Transverse colon (tissue), 4 donors: ENCODE measurements at regions of chr17 and their contacts with region 1.

Region 1: DNA sequence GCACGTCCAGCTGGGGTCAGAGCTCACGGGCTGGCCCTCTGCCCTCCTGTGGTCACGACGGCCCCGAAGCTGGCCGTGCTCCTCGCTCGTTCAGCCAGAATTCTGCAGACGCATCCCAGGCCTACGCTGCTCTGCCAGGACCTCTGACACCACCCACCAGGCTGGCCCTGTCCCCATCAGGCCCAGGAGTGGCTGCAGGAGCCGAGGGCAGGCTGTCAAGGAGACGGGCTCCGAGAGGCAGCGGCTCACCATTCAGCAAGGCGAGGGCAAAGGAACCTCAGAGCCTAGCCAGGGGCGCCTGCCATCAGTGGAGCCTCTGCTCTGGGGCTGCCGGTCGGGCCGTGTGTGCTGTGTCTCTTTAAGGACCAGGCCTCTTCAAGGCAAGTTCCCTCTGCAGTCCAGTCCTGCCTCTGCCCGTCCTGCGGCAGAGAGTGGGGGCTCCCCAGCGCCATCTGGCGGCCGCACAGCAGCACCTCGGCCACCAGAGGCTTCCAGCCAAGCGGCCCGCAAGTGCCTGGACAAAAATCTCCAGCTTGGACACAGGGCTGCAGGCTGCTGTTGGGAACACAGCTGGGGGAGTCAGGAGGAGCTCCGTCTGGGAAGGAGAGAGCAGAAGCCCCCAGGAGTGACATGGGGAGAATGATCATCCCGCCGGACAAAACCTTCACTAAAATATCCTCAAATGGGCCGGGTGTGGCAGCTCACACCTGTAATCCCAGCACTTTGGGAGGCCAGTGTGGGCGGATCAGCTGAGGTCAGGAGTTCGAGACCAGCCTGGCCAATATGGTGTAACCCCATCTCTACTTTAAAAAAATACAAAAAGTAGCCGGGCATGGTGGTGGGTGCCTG is 7.4 kb upstream of the ABR start:
- DNase-seq: peak; percentile 86
- H3K4me3 ChIP-seq: peak overlapping the region in 1 of 4 donors; percentile 10
- H3K27ac ChIP-seq: peak overlapping the region; percentile 35 to 69 (median 56)
- H3K4me1 ChIP-seq: peaks cover 0 to 41% (median 18%) of the 10 kb centered on the region in 4 donors
- H3K27me3 ChIP-seq: no peaks in the 10 kb centered on the region
- CTCF ChIP-seq: peak; percentile 94 to 99 (median 97)
- EP300 ChIP-seq: no peak
- POLR2A ChIP-seq: no peak

Region 2: DNA sequence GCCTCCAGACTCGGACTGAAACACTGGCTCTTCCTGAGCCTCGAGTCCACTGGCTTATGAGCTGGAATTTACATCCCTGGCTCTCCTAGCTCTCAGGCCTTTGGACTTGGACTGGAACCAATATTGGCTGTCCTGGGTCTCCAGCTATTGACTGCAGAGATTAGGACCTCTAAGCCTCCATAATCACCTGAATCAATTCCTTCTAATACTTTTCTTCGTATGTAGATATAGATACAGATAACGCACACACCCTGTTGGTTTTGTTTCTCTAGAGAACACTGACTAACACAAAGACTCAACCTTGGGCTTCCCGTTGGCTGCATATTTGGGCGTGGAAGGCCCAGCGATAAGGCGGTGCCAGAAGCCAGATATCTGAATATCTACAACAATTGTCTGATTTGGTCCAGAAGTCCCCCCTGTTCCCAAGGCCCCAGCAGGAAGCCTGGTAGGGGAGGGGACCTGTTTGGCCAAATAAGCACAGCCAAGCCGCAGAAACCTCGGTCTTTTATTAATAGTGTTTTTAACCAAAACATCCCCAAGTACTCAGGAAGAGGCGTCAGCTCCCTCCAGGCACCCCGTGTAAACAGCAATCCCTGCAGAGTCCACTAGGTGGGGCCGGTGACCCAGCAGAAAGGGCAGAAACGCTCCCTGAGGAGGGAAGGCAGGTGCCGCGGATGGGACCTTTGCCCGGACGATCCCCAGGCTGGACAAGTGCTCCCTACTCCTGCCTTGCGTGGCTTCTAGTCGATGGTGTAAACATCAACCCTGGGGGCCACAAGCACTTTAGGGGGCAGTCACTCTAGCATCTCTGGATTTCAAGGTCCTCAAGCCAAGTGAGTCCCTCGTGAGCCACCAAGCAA is 64.4 kb before region 1 on chr17:
- in situ Hi-C with region 1: loop called in 1 of 4 experiments (anchors 10 kb)
- intact Hi-C with region 1: loop called (anchors 2 kb)
- DNase-seq: peak; percentile 94
- H3K4me3 ChIP-seq: no peak overlapping the region
- H3K27ac ChIP-seq: peak overlapping the region; percentile 76 to 82 (median 78)
- H3K4me1 ChIP-seq: peaks cover 11 to 29% (median 25%) of the 10 kb centered on the region in 4 donors
- H3K27me3 ChIP-seq: no peaks in the 10 kb centered on the region
- CTCF ChIP-seq: peak; percentile 88 to 98 (median 93)
- EP300 ChIP-seq: no peak
- POLR2A ChIP-seq: no peak